ENCODE measurements at regions of chr16 and their contacts with region 1.

Region 1: DNA sequence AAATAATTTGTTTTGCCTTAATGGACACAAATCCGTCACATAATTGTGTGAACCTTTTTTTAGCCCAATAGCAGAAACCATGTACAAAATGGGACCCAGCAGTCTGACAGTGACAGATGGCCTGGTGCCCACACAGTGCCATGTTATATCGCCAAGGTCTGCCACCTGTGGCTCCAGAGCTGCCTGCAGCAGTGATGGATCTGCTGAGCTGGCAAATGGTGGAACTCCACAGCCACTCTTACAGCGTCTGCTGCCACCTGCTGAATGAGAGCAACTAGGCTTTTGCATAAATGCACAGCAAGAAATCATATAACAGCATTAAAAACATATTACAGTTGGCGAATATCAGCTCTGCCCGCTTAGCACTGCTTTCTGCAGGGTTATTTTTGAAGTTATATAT is 59.4 kb downstream of the NUP93 start:
- DNase-seq: peak; percentile 41 to 80
- ATAC-seq: peak; percentile 88 to 91
- H3K4me3 ChIP-seq: no peak overlapping the region
- H3K27ac ChIP-seq: no peak overlapping the region
- H3K4me1 ChIP-seq: peaks cover 4% of the 10 kb centered on the region; the same call in 1 of the 3 replicates
- CTCF ChIP-seq: peak; percentile 63
- EP300 ChIP-seq: no peak
- POLR2A ChIP-seq: no peak
- RAD21 ChIP-seq: peak; percentile 72 to 78

Region 2: DNA sequence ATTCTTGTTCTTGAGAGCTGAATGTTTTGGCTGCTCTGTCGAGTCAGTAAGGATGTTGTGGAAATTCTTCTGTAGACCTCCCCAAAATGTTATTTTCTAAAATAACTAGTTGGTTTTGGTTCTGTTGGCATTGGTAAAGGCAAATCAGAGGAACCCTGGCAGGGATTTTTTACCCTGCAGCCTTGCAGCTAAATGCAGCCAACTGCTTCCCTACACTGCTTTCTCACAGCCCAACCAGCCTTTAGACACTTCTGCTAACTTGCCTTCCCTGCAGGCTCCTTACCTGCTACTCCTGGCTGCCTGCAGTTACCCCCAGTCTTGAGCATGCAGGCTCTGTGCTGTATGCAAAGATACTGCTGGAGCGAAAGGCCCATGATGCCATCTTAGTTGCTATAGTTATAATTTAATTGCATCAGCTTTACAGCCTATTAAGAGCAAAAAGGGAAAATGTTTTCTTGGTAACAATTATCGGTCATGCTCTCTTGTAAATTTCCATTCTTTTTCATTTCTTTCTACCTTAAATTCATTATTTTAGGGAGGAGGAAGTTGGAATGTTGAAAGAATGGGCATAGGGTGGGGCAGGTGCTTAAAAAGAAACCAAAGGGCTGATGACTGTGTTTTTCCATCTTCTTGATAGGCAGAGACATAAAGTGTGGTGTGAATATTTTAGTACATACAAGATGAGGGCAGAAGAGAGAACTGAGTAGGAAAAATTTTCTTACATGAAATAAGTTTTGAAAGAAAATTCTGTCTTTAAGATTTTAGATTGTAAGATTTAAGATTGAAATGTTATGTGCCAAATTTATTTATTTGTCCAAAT is 39.5 kb before region 1 on chr16:
- CTCF ChIA-PET with region 1: interaction called, 15 read pairs
- POLR2A ChIA-PET with region 1: no interaction called
- DNase-seq: no peak
- ATAC-seq: no peak
- H3K4me3 ChIP-seq: no peak overlapping the region
- H3K27ac ChIP-seq: peak overlapping the region in 1 of 2 experiments; percentile 30; a peak in 1 of 6 replicates
- H3K4me1 ChIP-seq: peaks cover 7% of the 10 kb centered on the region; the same call in 2 of the 3 replicates
- CTCF ChIP-seq: no peak
- EP300 ChIP-seq: no peak
- POLR2A ChIP-seq: no peak
- RAD21 ChIP-seq: no peak

Region 3: GRCh38 chr16:56807011-56807675 is 17.8 kb after region 1 on chr16:
- CTCF ChIA-PET with region 1: interaction called, 23 read pairs
- POLR2A ChIA-PET with region 1: no interaction called
- DNase-seq: peak; percentile 39 to 62
- ATAC-seq: peak; percentile 81 to 92
- H3K4me3 ChIP-seq: no peak overlapping the region
- H3K27ac ChIP-seq: peak overlapping the region; percentile 79 to 87
- H3K4me1 ChIP-seq: peaks cover 51% of the 10 kb centered on the region
- CTCF ChIP-seq: no peak
- EP300 ChIP-seq: no peak
- POLR2A ChIP-seq: no peak
- RAD21 ChIP-seq: 0 out of 5 replicates have a peak, but pooled peaks of 1 of the 2 experiments have one; percentile 5

Region 4: GRCh38 chr16:56841233-56841632 is 51.9 kb after region 1 on chr16:
- CTCF ChIA-PET with region 1: interaction called, 151 read pairs
- POLR2A ChIA-PET with region 1: no interaction called
- DNase-seq: no peak
- ATAC-seq: no peak; a peak in 1 of 6 replicates
- H3K4me3 ChIP-seq: no peak overlapping the region
- H3K27ac ChIP-seq: no peak overlapping the region
- H3K4me1 ChIP-seq: no peaks in the 10 kb centered on the region
- CTCF ChIP-seq: no peak
- EP300 ChIP-seq: no peak
- POLR2A ChIP-seq: no peak
- RAD21 ChIP-seq: no peak

Region 5: GRCh38 chr16:56866943-56867830 is 77.8 kb after region 1 on chr16:
- CTCF ChIA-PET with region 1: interaction called, 52 read pairs
- POLR2A ChIA-PET with region 1: no interaction called
- DNase-seq: peak; percentile 60 to 66
- ATAC-seq: peak in 1 of 2 experiments; percentile 49; a peak in 3 of 6 replicates
- H3K4me3 ChIP-seq: no peak overlapping the region
- H3K27ac ChIP-seq: peak overlapping the region in 1 of 2 experiments; percentile 53; a peak in 3 of 6 replicates
- H3K4me1 ChIP-seq: no peaks in the 10 kb centered on the region
- CTCF ChIP-seq: peak; percentile 71
- EP300 ChIP-seq: no peak
- POLR2A ChIP-seq: no peak
- RAD21 ChIP-seq: peak; percentile 60 to 68

Region 6: DNA sequence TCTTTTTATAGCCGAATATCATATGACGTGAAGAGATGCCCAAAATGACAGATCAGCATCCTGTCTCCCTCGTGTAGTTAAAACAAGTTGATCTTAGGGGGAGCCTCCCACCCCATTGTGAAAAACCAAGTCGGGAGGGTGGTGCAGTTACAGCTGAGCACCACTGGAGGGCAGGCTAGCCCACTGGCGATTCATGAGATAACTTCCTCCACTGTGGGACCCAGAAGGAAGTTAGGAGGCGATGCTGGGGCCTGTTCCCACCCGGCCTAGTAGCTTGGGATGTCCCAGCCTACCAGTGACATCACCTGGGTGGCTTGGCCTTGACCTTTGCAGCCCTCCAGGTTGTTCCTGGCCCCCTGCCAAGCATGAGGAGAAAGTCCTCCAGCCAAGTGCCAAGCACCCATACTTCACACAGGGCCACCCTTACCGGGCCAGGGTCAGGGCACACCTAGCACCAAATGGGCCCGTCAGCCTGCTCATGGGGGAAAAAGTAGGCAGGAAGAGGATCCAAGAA is 295.0 kb after region 1 on chr16:
- CTCF ChIA-PET with region 1: interaction called, 15 read pairs
- POLR2A ChIA-PET with region 1: no interaction called
- DNase-seq: peak; percentile 81 to 93
- ATAC-seq: peak; percentile 67 to 87
- H3K4me3 ChIP-seq: no peak overlapping the region
- H3K27ac ChIP-seq: peak overlapping the region in 1 of 2 experiments; percentile 56; a peak in 3 of 6 replicates
- H3K4me1 ChIP-seq: no peaks in the 10 kb centered on the region
- CTCF ChIP-seq: peak; percentile 90
- EP300 ChIP-seq: no peak
- POLR2A ChIP-seq: no peak
- RAD21 ChIP-seq: peak; percentile 86 to 90